ENCODE measurements at regions of chr4 and their contacts with region 1.

Region 1: GRCh38 chr4:7802093-7802726 is 137.5 kb downstream of the AFAP1 start:
- DNase-seq: no peak
- ATAC-seq: peak; percentile 42

Region 2: DNA sequence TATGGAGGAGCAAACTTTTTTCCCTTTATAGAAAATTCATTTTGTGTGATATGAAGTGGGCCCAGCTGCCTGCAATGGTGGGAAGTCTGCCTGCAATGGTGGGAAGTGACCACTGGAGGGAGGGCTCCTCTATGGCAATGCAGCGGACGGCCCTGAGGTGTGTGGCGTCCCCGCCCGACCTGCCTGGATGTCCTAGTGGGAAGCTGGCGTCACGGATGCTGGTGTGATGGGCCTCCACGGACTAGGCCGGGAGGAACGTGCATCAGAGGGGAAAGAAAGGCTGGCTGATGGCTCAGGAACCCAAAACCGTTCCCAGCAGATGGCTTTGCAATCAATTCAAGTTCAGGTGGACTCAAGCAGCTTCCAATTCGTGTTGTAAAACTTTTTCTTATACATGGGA is 40.5 kb before region 1 on chr4:
- intact Hi-C with region 1: loop called (anchors 1 kb)
- DNase-seq: peak; percentile 88
- ATAC-seq: peak; percentile 94

Region 3: DNA sequence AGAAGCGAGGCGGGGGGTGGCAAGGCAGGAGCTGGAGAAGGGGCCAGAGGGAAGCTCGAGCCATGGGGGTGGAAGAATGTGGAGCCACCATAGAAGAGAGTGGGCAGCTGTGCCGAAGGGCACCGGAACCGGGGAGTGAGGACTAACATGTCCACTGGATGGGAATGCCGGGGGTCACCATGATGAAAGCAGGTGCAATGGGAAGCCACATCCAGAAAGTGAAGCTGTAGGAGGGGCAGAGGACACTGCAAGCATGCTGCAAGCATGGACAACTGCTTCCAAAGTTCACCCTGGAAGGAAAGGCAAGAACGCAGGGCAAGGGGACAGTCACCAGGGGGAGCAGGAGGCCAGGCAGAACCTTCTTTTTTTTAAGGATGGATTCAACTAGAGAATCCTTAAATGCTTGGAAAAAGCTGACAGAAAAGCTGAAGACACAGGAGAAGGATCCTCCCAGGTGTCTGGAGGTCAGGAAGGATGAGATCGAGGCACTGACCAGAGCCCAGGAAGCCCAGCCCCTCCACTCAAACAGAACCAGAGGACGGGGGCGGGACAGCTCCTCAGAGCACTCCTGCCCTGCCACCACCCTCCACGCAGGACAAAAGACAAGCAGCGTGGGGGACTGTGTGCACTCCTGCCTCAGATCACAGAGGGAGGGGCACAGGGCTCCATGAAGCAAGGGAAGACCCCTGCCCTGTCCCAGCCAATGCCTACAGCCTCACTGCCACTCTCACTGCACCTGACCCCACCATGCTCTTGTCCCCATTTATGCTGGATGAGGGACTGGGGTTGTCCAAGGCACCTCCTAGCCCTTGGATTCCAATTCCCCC is 31.8 kb before region 1 on chr4:
- intact Hi-C with region 1: loop called (anchors 2 kb)
- DNase-seq: no peak
- ATAC-seq: no peak

Region 4: GRCh38 chr4:7843831-7844593 is 41.8 kb after region 1 on chr4:
- intact Hi-C with region 1: loop called (anchors 5 kb)
- DNase-seq: peak; percentile 79
- ATAC-seq: peak; percentile 42

Region 5: DNA sequence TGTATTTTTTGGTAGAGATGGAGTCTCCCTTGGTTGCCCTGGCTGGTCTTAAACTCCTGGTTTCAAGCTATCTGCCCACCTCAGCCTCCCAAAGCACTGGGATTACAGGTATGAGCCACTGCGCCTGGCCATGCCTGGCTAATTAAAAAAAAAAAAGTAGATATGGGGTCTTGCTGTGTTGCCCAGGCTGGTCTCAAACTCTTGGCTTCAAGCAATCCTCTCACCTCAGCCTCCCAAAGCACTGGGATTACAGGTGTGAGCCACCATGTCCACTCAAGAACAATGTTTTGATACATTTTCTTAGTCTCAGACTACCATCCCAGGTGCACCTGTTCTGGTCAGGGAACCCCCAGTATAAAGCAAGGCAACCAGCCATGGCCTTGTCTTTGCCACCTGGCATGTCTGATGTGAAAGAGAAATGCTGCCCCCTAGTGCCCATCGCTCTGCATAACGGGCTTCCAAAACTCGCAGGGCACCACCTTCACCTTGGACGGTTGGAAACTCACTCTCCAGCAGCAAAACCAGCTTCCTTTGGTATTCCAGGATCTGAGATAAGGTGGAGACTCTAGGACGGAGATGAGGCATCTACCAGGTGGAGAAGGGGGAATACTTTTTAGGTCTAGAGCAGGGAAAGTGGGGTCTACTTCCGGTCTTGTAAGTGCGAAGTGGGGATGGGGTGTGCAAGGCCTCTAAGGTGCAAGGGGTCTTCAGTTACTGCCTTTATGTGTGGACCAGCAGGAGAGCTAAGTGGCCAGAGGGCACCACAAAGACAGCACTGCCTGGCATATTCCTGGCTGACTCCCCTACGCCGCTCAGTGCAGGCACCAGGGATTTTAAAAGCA is 185.2 kb after region 1 on chr4:
- intact Hi-C with region 1: loop called (anchors 1 kb)
- DNase-seq: peak; percentile 20
- ATAC-seq: peak; percentile 63

Region 6: GRCh38 chr4:8182858-8183725 is 380.9 kb after region 1 on chr4:
- intact Hi-C with region 1: loop called (anchors 10 kb)
- DNase-seq: peak; percentile 88
- ATAC-seq: peak; percentile 77